ENCODE measurements at regions of chr18 and their contacts with region 1.

Region 1: DNA sequence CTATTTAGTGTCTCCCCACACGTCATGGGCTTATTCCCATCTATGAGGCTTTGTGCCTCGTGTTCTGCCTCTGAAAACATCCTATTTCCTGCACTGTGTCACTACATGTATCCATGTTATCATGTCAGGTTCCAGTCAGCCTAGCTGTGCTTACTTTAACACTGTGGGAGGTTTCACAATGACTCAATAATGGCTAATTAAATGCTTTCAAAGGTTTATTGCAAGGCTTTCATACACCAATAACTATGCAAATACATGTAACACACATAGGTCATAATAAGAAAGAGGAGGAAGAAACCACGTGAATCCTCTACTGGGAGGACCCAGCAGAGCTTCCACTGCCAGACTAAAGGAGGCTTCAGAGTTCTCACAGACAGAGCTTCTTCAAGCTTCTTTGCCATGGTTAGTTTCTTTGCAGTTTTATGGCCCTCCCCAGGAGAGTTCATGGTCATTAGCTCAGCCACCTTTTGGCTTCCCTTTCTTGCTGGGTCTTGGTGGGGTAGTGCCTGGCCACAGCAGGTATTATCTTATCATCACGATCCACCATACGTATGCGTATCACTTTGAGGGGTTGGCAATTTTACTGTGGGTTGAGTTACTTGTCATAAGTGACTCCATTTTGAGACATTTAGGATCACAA is 5.1 kb upstream of the COLEC12 start:
- DNase-seq: no peak
- H3K4me3 ChIP-seq: no peak overlapping the region
- CTCF ChIP-seq: no peak

Region 2: DNA sequence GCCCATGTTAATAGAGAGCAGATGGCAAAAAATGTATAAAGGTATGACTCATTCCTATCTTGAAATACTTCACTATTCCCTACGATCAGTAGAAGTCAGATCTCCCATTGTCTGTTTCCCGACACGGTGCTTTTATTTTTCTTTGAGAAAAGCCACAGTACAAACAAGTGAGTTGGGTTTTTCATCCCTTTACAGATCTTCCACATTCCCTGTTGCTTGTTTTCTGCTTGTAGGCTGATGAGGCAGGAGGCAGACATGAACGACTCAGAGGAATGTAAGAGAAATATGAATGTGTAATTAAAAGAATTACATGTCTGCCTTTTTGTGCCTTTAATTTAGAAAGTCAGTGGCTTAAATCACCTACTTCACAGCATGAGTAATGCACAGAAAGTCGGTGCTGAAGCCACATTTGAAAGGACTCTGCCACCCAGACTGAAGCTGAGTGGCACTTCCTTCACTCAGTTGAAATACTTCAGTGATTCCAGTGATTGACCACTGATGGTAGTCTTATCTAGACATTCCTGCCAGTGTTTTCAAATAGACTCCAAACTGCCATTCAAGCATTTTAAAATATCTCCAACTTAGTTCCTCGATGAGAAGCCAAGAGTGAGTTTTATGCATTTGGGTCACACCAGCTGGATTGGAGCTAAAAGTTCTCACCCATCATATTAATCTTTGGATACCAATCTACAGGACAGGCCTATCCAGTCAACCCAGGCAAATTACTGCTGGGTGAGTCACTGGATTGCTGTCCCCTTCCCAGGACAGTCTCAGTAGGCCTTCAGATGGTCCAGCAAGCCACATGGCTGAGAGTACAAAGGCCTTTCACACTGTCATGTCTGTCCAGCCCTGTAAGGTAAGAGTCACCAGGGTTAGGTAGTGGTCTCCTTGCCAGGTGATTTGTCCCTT is 84.1 kb before region 1 on chr18:
- in situ Hi-C with region 1: loop called (anchors 5 kb)
- DNase-seq: peak; percentile 71
- H3K4me3 ChIP-seq: no peak overlapping the region
- CTCF ChIP-seq: no peak

Region 3: DNA sequence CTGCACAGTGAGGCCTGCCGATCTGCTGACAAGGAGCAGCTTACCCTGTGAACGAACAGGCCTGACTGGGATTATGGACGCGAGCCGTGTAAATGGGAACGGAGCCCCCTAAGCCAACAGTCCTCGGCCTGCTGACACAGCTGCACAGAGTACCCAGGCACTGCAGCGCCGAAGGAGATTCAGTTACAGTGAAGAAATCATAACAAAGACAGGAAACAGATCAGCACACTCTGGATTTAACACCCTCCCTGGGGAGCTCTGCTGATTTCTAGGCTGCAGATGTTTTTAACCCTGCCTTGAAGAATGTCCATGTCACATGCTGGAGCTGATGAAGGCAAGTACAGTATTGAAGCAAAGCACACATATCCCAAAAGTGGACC is 48.5 kb before region 1 on chr18:
- in situ Hi-C with region 1: no loop called
- DNase-seq: no peak
- H3K4me3 ChIP-seq: no peak overlapping the region
- CTCF ChIP-seq: no peak

Measured in astrocyte of the cerebellum (primary cell).